H1 (cell line): ENCODE measurements at regions of chr10 and their contacts with region 1.

Region 1: DNA sequence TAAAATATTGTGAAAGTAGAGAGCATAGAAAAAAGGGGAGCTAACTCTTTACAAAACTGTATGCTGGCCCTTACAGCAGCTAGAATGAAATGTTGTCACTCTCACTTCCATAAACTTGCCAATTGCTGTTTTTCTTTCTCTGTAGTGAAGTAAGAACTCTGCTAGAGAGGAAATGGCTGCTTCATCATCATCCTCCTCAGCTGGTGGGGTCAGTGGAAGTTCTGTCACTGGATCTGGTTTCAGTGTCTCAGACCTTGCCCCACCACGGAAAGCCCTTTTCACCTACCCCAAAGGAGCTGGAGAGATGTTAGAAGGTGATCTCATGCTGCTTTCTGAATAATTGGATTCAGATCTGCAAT is 7.6 kb upstream of the ASCC1 start:
- DNase-seq: no peak
- H3K4me3 ChIP-seq: no peak overlapping the region
- H3K27ac ChIP-seq: no peak overlapping the region
- H3K4me1 ChIP-seq: peaks cover 0 to 2% (median under 1%) of the 10 kb centered on the region in 4 experiments; a peak in 2 of 7 replicates
- H3K27me3 ChIP-seq: no peaks in the 10 kb centered on the region
- CTCF ChIP-seq: no peak
- EP300 ChIP-seq: no peak
- POLR2A ChIP-seq: no peak
- RAD21 ChIP-seq: no peak

Region 2: GRCh38 chr10:72133517-72133916 is 90.2 kb before region 1 on chr10:
- CTCF ChIA-PET with region 1: interaction called, 39 read pairs
- POLR2A ChIA-PET with region 1: no interaction called
- DNase-seq: no peak
- H3K4me3 ChIP-seq: no peak overlapping the region
- H3K27ac ChIP-seq: no peak overlapping the region
- H3K4me1 ChIP-seq: no peaks in the 10 kb centered on the region
- H3K27me3 ChIP-seq: no peaks in the 10 kb centered on the region
- CTCF ChIP-seq: no peak
- EP300 ChIP-seq: no peak
- POLR2A ChIP-seq: no peak
- RAD21 ChIP-seq: no peak

Region 3: GRCh38 chr10:72390764-72391163 is 167.0 kb after region 1 on chr10:
- CTCF ChIA-PET with region 1: no interaction called
- POLR2A ChIA-PET with region 1: no interaction called
- DNase-seq: no peak
- H3K4me3 ChIP-seq: no peak overlapping the region
- H3K27ac ChIP-seq: no peak overlapping the region
- H3K4me1 ChIP-seq: peaks cover 0 to 2% (median 0%) of the 10 kb centered on the region in 4 experiments; a peak in 1 of 7 replicates
- H3K27me3 ChIP-seq: no peaks in the 10 kb centered on the region
- CTCF ChIP-seq: no peak
- EP300 ChIP-seq: no peak
- POLR2A ChIP-seq: no peak
- RAD21 ChIP-seq: no peak